ENCODE measurements at regions of chr17 and their contacts with region 1.

Region 1: DNA sequence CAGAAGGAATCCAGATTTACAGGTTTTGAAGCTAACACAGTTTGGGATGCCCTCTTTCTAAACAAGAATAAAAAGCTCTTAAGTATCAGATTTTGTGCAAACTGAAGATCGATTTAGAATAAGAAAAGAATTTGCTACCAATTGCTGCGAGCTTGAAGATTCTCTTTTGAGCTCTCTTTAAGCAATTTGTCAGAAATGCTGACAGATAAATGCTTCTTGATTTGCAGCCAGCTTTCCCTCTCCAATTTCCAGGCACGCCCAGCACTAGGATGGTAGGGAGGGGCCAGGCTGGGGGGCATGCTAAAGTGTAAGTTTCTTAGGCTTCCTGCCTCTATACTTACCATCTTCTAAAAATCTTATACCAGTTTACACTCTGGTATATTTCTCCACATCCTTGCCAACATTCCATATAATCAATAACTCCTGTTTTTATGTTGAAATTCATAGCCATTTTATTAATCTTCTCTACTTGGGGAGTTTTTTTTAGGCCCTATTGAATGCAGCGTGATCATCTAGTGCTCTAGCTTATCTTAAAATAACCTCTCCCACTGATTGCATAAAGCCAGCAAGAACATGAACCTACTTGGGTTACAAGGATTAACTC is 17.5 kb downstream of the ACSF2 start:
- DNase-seq: no peak
- H3K4me3 Mint-ChIP-seq: peak overlapping the region; percentile 10
- H3K27ac Mint-ChIP-seq: no peak overlapping the region
- H3K4me1 Mint-ChIP-seq: peaks cover 18% of the 10 kb centered on the region
- H3K27me3 Mint-ChIP-seq: no peaks in the 10 kb centered on the region
- CTCF ChIP-seq: no peak

Region 2: DNA sequence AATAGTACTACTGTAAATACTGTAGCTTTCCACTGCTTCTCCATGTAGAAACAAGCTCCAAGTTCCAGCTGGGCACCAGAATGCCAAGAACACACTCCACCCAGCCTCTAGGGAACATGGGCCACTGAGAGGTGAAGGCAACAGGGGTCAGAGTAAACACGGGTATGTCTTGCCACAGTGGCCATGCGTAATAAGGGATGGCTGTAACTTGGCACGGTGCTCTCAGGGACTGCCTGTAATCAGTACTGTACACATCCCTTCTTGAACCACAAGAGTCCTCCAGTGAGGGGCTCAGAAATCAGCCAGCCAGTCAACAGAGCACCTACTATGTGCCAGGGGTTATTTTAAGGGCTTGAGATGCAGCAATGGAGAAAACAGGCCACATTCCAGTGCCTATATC is 57.0 kb before region 1 on chr17:
- CTCF ChIA-PET with region 1: no interaction called
- POLR2A ChIA-PET with region 1: no interaction called
- intact Hi-C with region 1: no loop called
- DNase-seq: no peak
- H3K4me3 Mint-ChIP-seq: no peak overlapping the region
- H3K27ac Mint-ChIP-seq: no peak overlapping the region
- H3K4me1 Mint-ChIP-seq: peaks cover 5% of the 10 kb centered on the region
- H3K27me3 Mint-ChIP-seq: no peaks in the 10 kb centered on the region
- CTCF ChIP-seq: no peak

Region 3: DNA sequence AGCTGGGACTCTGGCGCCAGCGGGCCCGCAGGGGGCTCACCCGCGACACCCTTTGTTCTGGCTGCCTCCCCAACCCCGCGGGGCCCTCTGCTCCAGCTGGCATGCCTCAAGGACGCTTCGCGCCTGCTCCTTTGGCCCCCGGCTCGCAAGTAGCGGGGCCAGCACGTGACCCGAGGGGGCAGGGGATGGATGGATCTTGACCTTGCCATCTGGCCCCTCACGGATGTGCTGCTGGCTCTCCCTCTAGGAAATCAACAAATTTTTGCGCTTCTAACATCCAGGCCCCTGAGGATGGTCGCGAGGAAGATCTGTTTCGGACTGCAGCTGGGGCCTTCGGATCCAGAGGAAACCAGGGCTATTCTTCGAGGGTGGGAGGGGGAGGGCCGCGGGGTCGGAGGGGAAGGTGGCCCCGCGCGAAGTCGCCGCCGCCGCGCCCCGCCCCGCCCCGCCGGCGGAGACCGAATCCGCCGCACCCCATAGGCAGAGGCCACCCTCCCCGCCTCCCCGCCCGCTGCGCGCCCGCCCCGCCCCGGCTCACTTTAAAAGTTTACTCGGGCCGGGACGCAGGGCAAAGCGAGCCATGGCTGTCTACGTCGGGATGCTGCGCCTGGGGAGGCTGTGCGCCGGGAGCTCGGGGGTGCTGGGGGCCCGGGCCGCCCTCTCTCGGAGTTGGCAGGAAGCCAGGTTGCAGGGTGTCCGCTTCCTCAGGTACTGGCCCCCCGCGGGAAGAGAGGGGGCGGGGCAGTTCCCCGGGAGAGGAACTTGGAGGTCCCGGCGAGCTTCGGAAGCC is 17.6 kb before region 1 on chr17 and contains the start of gene ACSF2:
- CTCF ChIA-PET with region 1: interaction called, 4 read pairs
- POLR2A ChIA-PET with region 1: interaction called, 76 read pairs
- intact Hi-C with region 1: no loop called
- DNase-seq: peak; percentile 63
- H3K4me3 Mint-ChIP-seq: peak within 1 kb of the TSS; percentile 71
- H3K27ac Mint-ChIP-seq: peak within 1 kb of the TSS; percentile 93
- H3K4me1 Mint-ChIP-seq: peaks cover 16% of the 10 kb centered on the region
- H3K27me3 Mint-ChIP-seq: no peaks in the 10 kb centered on the region
- CTCF ChIP-seq: no peak
- total RNA-seq, gene ACSF2: 10.5 and 17.8 TPM in 2 replicates